Thyroid gland (tissue), 4 donors: ENCODE measurements at regions of chr16 and their contacts with region 1.

Region 1: DNA sequence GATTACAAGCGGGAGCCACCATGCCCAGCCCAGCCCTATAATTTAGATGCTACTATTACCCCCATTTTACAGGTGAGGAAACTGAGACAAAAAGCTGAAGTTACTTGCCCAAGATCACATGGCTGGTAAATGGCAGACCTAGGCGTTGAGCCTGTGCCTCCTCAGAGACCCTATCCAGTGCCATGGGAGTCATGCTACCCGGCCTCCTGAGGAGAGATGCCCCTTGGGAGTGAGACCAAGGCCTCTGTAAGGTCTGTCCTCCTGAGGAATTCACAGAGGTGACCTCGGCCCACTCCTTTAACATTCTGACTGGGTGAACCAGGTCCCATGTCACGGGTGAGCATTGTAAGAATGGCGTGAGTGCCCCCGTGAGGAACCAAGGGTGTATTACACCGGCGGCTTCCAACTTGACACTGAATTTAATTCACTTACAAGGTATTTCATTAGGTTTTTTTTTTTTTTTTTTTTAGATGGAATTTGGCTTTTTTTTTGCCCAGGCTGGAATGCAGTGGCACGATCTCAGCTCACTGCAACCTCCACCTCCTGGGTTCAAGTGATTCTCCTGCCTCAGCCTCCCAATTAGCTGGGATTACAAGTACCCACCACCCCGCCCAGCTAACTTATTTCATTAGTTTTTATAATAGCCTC is 95.7 kb downstream of the ABCC6 start:
- DNase-seq: peak; percentile 82 to 83
- H3K4me3 ChIP-seq: no peak overlapping the region
- H3K27ac ChIP-seq: peak overlapping the region; percentile 12 to 49 (median 20)
- H3K4me1 ChIP-seq: no peaks in the 10 kb centered on the region
- H3K27me3 ChIP-seq: no peaks in the 10 kb centered on the region
- CTCF ChIP-seq: peak; percentile 68 to 99 (median 92)
- POLR2A ChIP-seq: no peak

Region 2: GRCh38 chr16:15874745-15875314 is 252.8 kb before region 1 on chr16:
- intact Hi-C with region 1: loop called (anchors 2 kb)
- DNase-seq: peak; percentile 62 to 64
- H3K4me3 ChIP-seq: no peak overlapping the region
- H3K27ac ChIP-seq: peak overlapping the region; percentile 10 to 61 (median 51)
- H3K4me1 ChIP-seq: peaks cover 9 to 10% of the 10 kb centered on the region in 2 donors
- H3K27me3 ChIP-seq: no peaks in the 10 kb centered on the region
- CTCF ChIP-seq: peak; percentile 34 to 75 (median 69)
- POLR2A ChIP-seq: no peak

Region 3: DNA sequence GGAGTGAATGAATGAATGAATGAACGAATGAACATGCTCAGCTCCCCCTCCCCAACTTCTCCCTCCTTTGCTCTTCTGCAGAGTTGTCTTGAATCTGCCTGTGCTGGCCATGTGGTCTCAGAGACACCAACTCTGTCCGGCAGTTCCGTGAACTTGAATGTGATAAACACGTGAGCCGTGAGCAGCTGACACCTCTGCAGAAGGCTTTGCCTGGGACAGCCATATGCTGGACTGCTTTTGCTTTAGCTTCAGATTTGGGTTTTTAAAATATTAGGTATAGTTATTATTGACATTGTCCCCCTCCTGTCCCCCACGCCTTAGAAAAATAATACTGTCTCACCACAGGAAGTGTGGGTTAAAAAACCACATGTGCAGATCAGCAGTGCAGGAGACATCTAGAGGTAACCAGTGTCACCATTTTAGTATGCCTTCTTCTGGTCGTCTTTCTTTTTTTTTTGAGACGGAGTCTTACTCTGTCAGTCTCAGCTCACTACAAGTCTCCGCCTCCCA is 94.3 kb before region 1 on chr16:
- intact Hi-C with region 1: no loop called
- DNase-seq: no peak
- H3K4me3 ChIP-seq: no peak overlapping the region
- H3K27ac ChIP-seq: peak overlapping the region in 1 of 3 donors; percentile 95
- H3K4me1 ChIP-seq: peaks cover 29 to 34% of the 10 kb centered on the region in 2 donors
- H3K27me3 ChIP-seq: no peaks in the 10 kb centered on the region
- CTCF ChIP-seq: no peak
- POLR2A ChIP-seq: no peak

Region 4: GRCh38 chr16:16062023-16062932 is 65.3 kb before region 1 on chr16:
- intact Hi-C with region 1: no loop called
- DNase-seq: no peak
- H3K4me3 ChIP-seq: no peak overlapping the region
- H3K27ac ChIP-seq: no peak overlapping the region
- H3K4me1 ChIP-seq: peaks cover 6 to 9% of the 10 kb centered on the region in 2 donors
- H3K27me3 ChIP-seq: no peaks in the 10 kb centered on the region
- CTCF ChIP-seq: no peak
- POLR2A ChIP-seq: no peak